ENCODE measurements at regions of chr18 and their contacts with region 1.

Region 1: DNA sequence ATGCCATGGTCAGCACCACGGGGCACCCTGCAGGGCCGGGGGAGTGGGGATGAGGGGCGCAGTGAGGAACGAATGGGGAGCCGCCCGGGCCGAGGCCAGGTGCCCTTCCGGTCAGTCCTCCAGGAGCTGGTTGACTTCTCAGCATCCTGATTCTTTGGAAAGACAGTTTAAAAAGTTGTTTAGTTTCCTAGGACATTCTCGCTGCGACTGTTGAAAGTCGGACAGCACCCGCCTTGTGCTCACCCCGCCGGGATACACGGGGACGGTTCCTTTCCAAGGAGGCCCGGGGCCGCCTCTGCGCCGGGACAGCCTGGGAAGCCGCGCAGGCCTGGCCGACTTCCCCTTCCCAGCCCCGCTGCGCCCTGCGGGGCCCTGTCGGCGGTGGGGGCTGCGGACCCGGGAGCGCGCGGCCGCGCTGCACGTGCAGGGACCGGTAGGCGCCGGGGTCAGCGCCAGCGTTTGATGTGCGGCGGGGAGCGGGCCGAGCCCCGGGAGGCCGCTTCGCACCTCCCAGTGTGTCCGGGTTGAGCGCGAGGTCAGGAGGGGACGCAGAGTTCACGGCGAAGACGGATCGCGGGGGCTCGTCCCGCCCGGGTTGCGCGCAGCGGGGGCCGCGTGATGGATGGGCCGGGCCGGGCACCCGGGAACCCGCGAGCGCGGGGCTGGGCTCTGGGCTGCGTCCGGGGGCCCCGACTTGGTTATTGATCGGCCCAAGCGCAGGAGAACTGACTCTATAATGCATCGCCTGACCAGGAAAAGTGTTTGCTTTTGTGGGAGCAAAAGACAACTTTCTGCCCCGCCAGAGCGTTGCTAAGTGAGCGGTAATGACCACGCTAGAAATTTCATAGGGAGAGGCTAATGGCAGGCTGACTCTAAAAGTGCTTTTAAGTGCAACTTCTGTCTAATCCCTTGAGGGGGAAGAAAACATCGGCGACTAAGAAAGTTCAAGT is 28.0 kb upstream of the SMIM21 start:
- DNase-seq: peak; percentile 19
- CTCF ChIP-seq: no peak

Region 2: DNA sequence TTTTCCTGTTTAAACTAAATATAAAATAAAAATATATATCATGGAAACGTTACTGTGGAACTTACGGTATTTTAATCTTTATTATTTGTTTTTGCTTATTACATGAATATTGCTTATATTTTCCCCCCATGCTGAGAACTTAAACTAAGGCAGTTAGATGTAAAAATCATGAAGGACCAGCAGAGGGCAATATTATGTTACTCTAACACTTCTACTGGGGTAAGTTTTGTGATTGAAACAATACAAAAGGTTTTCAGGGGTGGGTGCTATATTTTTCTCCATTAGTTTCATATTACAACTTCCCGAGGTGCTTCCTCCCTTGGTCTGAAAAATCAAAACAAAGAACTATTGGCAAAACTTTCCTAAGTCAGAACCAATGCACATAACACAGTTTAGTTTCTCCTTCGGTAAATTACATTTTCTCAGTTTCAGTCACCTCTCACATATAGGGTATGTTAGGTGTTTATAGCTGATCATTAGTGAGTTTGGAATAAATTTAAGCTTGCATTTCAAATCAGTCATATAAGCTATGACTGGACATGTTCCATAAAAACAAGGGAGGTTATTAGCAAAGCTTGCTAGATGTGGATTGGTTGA is 803.0 kb before region 1 on chr18:
- in situ Hi-C with region 1: loop called (anchors 25 kb)
- DNase-seq: peak; percentile 34
- CTCF ChIP-seq: peak; percentile 47

Region 3: DNA sequence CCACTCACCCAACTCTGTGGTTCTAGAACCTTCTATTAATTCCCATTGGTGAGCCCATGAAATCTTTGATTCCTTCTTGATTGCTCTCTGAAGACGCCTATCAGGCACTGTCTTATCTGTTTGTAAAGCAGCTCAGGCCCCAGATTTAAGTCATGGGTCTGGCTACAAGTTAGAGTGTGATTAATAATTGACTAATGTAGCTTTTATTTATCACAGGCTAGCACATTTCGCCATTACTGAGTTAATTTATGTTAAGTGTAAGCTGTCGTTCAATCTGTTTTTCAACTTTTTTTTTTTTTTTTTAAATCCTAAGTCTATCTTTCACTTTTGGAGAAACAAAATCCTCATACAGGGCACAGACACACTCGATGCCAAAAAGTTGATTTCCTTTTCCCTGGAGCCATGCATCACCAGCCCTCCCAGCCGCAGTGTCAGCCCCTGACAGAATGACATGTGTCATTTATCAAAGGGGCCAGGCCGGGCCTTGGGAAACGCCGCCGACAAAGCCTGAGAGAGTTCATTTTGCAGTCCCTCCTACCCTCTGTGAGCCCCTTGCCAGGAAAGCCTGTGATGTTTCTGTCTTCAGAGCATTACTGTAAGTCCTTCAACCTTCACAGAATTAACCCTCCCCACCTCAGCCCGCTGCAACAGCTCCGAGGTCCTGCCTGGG is 229.1 kb before region 1 on chr18:
- in situ Hi-C with region 1: no loop called
- DNase-seq: no peak
- CTCF ChIP-seq: no peak

Measured in GM13977 (cell line).